ENCODE measurements at regions of chr9 and their contacts with region 1.

Region 1: DNA sequence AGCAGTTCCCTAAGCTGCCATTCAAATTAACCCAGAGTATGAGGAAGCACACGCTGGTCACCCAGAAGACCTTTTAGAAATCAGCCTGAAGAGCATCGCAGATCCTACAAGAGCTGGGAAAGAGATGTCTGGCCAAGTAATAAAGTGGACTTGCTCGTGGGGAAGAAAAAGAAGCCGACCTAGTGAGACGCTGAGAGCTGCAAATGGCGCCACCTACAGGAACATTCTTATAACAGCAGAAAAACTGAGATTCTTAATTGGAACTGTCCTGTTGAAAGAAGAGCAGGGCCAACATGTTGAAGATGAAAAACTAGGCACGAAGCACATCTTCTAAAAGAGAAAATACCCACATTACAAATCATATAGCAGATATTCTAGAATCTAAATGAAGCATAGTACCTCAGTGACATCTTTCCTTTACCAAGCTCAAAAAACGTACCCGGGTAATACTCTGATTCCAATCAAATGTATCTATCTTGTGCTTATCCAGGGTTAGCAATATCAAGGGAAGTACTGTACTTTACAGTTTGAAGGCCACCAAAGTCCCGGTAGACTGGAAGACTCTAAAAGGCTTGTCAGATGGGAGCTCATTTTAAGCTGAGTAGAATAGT is 3.9 kb upstream of the GNAQ start:
- DNase-seq: peak; percentile 46 to 47
- H3K4me3 ChIP-seq: no peak overlapping the region
- H3K27ac ChIP-seq: no peak overlapping the region
- H3K4me1 ChIP-seq: peaks cover 39% of the 10 kb centered on the region
- H3K27me3 ChIP-seq: no peaks in the 10 kb centered on the region
- CTCF ChIP-seq: peak; percentile 89

Region 2: GRCh38 chr9:77456829-77457437 is 578.6 kb before region 1 on chr9:
- CTCF ChIA-PET with region 1: no interaction called
- POLR2A ChIA-PET with region 1: no interaction called
- intact Hi-C with region 1: loop called (anchors 5 kb)
- DNase-seq: peak; percentile 75 to 84
- H3K4me3 ChIP-seq: no peak overlapping the region
- H3K27ac ChIP-seq: no peak overlapping the region
- H3K4me1 ChIP-seq: no peaks in the 10 kb centered on the region
- H3K27me3 ChIP-seq: no peaks in the 10 kb centered on the region
- CTCF ChIP-seq: peak; percentile 93

Region 3: DNA sequence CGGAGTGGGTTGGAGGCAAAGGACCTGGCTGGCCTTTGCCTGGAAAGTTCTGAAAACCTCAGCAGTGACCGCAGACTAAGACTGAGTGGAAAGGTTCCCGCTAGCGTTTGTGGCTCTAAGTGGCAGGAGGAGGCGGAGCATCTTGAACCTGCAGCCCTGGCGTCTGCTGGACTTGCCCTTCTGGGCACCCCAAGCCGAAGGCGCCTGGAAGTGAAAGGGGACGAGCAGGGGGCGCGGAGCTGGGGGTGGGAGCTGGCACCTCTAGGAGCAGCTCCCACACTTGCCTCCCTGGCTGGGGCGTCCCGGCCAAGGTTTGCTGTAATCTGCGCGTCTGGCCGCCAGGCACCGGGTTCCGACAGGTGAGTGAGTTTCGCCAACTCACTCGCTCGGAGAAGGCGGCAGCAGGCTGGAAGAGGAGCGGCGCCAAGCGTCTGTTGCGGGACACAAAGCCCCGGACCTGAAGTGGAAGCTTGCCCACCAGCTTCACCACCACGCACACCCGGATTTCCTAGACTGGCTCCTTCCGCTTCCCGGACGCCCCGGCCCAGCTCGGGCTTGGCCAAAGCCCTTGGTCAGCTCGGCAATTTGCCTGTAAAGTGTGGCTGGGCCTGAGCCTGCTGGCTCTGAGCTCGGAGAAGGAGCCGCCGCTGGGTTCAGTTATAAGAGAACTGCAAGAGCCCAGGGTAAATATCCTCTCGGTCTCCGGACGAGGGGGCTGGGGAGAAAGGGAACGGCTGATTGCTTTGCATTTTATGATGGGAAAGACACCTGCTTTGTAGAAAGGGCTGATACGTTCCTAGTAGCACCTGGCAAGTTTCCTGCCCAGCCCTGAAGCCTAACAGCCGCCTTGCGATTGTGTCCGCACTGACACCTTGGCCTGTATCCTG is 387.0 kb before region 1 on chr9 and contains the start of gene GNA14:
- CTCF ChIA-PET with region 1: no interaction called
- POLR2A ChIA-PET with region 1: no interaction called
- intact Hi-C with region 1: loop called (anchors 5 kb)
- DNase-seq: peak in 1 of 2 experiments; percentile 70
- H3K4me3 ChIP-seq: no peak within 1 kb of the TSS
- H3K27ac ChIP-seq: no peak within 1 kb of the TSS
- H3K4me1 ChIP-seq: no peaks in the 10 kb centered on the region
- H3K27me3 ChIP-seq: no peaks in the 10 kb centered on the region
- CTCF ChIP-seq: no peak
- total RNA-seq, gene GNA14: 1.1 and 1.3 TPM in 2 replicates

Region 4: DNA sequence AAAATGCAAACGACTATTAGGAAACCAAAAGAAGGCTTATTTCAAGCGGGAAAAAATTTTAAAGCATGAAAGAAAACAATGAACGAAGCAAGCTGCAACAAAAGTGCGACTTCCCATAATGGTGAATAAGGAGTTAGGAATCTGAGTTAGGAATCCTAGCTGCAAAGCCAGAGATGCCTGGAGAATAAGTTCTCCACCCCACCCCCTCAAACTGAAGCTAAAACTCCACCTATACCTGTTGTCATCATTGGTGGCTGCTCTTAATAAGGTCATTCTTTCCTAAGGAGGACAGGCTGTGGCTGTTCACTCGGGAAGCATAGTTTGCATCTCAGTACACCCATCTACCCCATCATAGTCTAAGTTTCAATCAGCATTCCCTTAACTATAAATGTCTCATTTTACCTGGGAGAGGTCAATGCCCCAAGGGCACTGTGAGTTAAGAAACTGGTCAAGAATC is 151.1 kb before region 1 on chr9:
- CTCF ChIA-PET with region 1: no interaction called
- POLR2A ChIA-PET with region 1: interaction called, 3 read pairs
- intact Hi-C with region 1: loop called (anchors 1 kb)
- DNase-seq: peak; percentile 68 to 90
- H3K4me3 ChIP-seq: 0 out of 2 replicates have a peak overlapping the region, but pooled peaks have one; percentile 20
- H3K27ac ChIP-seq: peak overlapping the region; percentile 75
- H3K4me1 ChIP-seq: peaks cover 72% of the 10 kb centered on the region
- H3K27me3 ChIP-seq: no peaks in the 10 kb centered on the region
- CTCF ChIP-seq: no peak

Region 5: GRCh38 chr9:78121488-78121887 is 86.0 kb after region 1 on chr9:
- CTCF ChIA-PET with region 1: no interaction called
- POLR2A ChIA-PET with region 1: no interaction called
- intact Hi-C with region 1: loop called (anchors 1 kb)
- DNase-seq: peak; percentile 26 to 70
- H3K4me3 ChIP-seq: no peak overlapping the region
- H3K27ac ChIP-seq: no peak overlapping the region
- H3K4me1 ChIP-seq: peaks cover 21% of the 10 kb centered on the region
- H3K27me3 ChIP-seq: no peaks in the 10 kb centered on the region
- CTCF ChIP-seq: peak; percentile 76

Region 6: GRCh38 chr9:78325343-78325742 is 289.9 kb after region 1 on chr9:
- CTCF ChIA-PET with region 1: no interaction called
- POLR2A ChIA-PET with region 1: no interaction called
- intact Hi-C with region 1: no loop called
- DNase-seq: no peak
- H3K4me3 ChIP-seq: no peak overlapping the region
- H3K27ac ChIP-seq: no peak overlapping the region
- H3K4me1 ChIP-seq: no peaks in the 10 kb centered on the region
- H3K27me3 ChIP-seq: no peaks in the 10 kb centered on the region
- CTCF ChIP-seq: no peak

Measured in PC-9 (cell line).